Activated CD4-positive, alpha-beta memory T cell treated with anti-CD3 and anti-CD28 coated beads for 36 hours (primary cell): ENCODE measurements at regions of chr9 and their contacts with region 1.

Region 1: DNA sequence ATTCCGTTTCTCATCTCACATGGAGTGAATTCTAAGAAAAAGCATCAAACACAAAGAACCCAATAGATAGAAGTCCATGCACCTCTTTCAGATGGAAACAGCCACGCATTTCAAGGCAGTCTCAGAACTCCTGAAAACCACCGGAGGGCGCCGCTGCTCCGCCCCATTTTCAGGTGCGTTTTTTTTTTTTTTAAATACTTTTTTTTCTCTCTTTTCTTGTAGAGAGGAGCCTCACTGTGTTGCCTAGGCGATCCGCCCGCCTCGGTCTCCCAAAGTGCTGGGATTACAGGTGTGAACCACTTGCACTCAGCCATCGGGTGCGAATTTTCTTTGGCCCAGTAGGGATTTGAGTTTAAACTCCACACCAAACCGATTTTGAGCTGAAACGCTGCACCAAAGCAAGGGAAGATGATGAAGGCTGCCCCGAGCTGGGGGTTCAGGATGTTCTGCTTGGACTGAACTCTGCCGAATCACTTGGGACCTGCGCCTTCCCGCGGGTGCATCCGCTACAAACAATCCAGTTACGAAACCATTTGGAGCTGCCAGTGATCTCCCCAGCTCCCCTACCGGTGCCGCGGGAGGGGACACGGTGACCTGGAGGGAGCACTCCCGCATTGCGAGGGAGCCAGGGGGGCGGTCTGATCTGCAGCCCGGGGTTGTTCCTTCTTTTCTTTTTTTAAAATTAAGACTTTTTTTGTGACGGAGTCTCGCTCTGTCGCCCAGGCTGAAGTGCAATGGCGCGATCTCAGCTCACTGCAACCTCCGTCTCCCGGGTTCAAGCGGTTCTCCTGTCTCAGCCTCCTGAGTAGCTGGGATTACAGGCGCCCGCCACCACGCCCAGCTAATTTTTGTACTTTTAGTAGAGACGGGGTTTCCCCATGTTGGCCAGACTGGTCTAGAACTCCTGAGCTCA is 1.4 kb downstream of the PTGR1 start:
- DNase-seq: peak; percentile 76
- H3K4me3 Mint-ChIP-seq: peak overlapping the region; percentile 83
- H3K27ac Mint-ChIP-seq: no peak overlapping the region
- H3K4me1 Mint-ChIP-seq: peaks cover 14% of the 10 kb centered on the region
- H3K27me3 Mint-ChIP-seq: peaks cover 28% of the 10 kb centered on the region

Region 2: GRCh38 chr9:111582888-111583287 is 15.2 kb before region 1 on chr9:
- CTCF ChIA-PET with region 1: interaction called, 11 read pairs
- POLR2A ChIA-PET with region 1: no interaction called
- intact Hi-C with region 1: no loop called
- DNase-seq: no peak
- H3K4me3 Mint-ChIP-seq: no peak overlapping the region
- H3K27ac Mint-ChIP-seq: no peak overlapping the region
- H3K4me1 Mint-ChIP-seq: no peaks in the 10 kb centered on the region
- H3K27me3 Mint-ChIP-seq: no peaks in the 10 kb centered on the region

Region 3: DNA sequence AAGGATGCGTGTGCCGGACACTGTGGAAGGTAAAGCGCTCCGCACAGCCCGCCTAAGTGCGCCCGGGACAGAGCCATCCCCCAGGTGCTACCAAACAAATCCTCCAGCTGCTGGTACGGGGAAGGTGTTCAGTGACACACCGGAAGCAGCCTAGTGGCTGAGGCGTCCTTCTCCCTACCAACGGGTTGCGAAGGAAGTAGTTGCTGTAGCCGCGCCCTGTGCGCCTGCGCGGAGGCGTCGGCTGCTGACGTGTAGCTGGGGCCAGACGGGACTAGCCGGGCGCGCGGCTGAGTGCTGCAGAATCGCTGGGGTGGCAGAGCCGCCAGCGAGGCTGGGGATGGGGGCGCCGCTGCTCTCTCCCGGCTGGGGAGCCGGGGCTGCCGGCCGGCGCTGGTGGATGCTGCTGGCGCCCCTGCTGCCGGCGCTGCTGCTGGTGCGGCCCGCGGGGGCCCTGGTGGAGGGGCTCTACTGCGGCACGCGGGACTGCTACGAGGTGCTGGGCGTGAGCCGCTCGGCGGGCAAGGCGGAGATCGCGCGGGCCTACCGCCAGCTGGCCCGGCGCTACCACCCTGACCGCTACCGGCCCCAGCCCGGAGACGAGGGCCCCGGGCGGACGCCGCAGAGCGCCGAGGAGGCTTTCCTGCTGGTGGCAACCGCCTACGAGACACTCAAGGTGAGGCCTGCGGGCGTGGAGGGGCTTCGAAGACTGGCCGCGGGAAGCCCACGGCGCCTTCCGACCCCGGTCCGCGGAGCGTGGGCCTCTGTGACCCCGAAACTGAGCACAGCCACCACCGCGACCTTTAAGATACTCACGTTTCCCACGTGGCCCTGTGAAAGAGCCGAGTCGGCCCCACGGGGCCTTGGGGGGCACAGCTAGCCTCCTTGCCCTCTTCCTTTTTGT is 33.2 kb after region 1 on chr9 and contains the start of gene DNAJC25:
- CTCF ChIA-PET with region 1: interaction called, 6 read pairs
- POLR2A ChIA-PET with region 1: interaction called, 5 read pairs
- intact Hi-C with region 1: loop called (anchors 1 kb)
- DNase-seq: peak; percentile 98
- H3K4me3 Mint-ChIP-seq: peak within 1 kb of the TSS; percentile 90
- H3K27ac Mint-ChIP-seq: peak within 1 kb of the TSS; percentile 74
- H3K4me1 Mint-ChIP-seq: peaks cover 43% of the 10 kb centered on the region
- H3K27me3 Mint-ChIP-seq: no peaks in the 10 kb centered on the region
- total RNA-seq, gene DNAJC25: 4.2 to 4.5 TPM

Region 4: DNA sequence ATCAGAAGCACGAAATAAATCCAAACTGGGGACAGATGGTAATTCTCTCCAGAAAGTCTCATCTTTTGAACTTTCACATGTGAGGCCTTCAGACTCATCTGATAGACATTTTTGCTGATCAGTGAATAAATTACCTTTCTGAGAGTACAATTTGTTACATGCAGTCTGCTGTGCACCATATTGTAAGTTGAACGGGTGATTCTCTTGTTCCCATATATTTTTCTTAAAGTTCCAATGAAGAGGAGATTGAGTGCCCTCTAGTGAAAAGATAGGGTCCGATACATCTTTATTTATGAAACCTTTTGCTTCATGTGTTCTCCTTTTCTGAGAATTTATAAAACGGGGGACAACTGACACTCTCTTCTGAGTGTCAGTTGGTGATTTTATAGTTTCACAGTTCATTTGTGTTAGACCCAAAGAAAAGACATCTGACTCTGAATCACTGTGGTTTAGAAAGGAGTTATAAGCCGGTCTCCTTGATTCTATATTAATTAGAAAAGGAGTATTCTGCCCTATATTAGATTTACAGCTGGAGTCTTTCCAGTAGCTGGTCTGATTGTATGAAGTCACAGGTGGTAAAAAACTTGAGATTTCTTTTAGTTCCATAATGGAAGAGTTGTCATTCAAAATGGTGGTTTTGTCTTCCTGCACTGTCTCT is 93.7 kb after region 1 on chr9:
- CTCF ChIA-PET with region 1: interaction called, 37 read pairs
- POLR2A ChIA-PET with region 1: no interaction called
- intact Hi-C with region 1: loop called (anchors 1 kb)
- DNase-seq: no peak
- H3K4me3 Mint-ChIP-seq: no peak overlapping the region
- H3K27ac Mint-ChIP-seq: no peak overlapping the region
- H3K4me1 Mint-ChIP-seq: no peaks in the 10 kb centered on the region
- H3K27me3 Mint-ChIP-seq: no peaks in the 10 kb centered on the region

Region 5: GRCh38 chr9:112074250-112075008 is 476.4 kb after region 1 on chr9:
- CTCF ChIA-PET with region 1: interaction called, 28 read pairs
- POLR2A ChIA-PET with region 1: no interaction called
- intact Hi-C with region 1: loop called (anchors 1 kb)
- DNase-seq: peak; percentile 71
- H3K4me3 Mint-ChIP-seq: peak overlapping the region; percentile 5
- H3K27ac Mint-ChIP-seq: peak overlapping the region; percentile 3
- H3K4me1 Mint-ChIP-seq: peaks cover 32% of the 10 kb centered on the region
- H3K27me3 Mint-ChIP-seq: peaks cover 1% of the 10 kb centered on the region